ENCODE measurements at regions of chrX and their contacts with region 1.

Region 1: GRCh38 chrX:133985164-133985966 is at the start of gene GPC3:
- DNase-seq: peak; percentile 14 to 61 (median 39)
- ATAC-seq: peak; percentile 88
- H3K4me3 ChIP-seq: no peak within 1 kb of the TSS
- H3K4me3 Mint-ChIP-seq: peak within 1 kb of the TSS; percentile 69 to 89 (median 80)
- H3K27ac ChIP-seq: no peak within 1 kb of the TSS
- H3K27ac Mint-ChIP-seq: no peak within 1 kb of the TSS
- H3K4me1 ChIP-seq: no peaks in the 10 kb centered on the region
- H3K4me1 Mint-ChIP-seq: peaks cover 0 to 8% (median 4%) of the 10 kb centered on the region in 7 donors
- H3K27me3 ChIP-seq: peaks cover 0 to 3% of the 10 kb centered on the region in 2 donors
- H3K27me3 Mint-ChIP-seq: peaks cover 11 to 50% (median 18%) of the 10 kb centered on the region in 5 donors
- total RNA-seq, gene GPC3: 0.24 to 0.88 (median 0.42) TPM

Region 2: GRCh38 chrX:132837126-132837525 is 1148.2 kb before region 1 on chrX:
- CTCF ChIA-PET with region 1: no interaction called
- POLR2A ChIA-PET with region 1: no interaction called
- intact Hi-C with region 1: no loop called
- DNase-seq: no peak
- ATAC-seq: no peak
- H3K4me3 ChIP-seq: no peak overlapping the region
- H3K4me3 Mint-ChIP-seq: no peak overlapping the region
- H3K27ac ChIP-seq: no peak overlapping the region
- H3K27ac Mint-ChIP-seq: no peak overlapping the region
- H3K4me1 ChIP-seq: no peaks in the 10 kb centered on the region
- H3K4me1 Mint-ChIP-seq: no peaks in the 10 kb centered on the region
- H3K27me3 ChIP-seq: no peaks in the 10 kb centered on the region
- H3K27me3 Mint-ChIP-seq: peaks cover 0 to 6% (median 0%) of the 10 kb centered on the region in 5 donors

Region 3: GRCh38 chrX:133921764-133922389 is 63.5 kb before region 1 on chrX:
- CTCF ChIA-PET with region 1: no interaction called
- POLR2A ChIA-PET with region 1: no interaction called
- intact Hi-C with region 1: loop called in 1 of 2 experiments (anchors 10 kb)
- DNase-seq: peak in 5 of 9 donors; percentile 7 to 33 (median 22)
- ATAC-seq: no peak
- H3K4me3 ChIP-seq: peak overlapping the region; percentile 24
- H3K4me3 Mint-ChIP-seq: peak overlapping the region in 5 of 10 donors; percentile 7 to 90 (median 83)
- H3K27ac ChIP-seq: no peak overlapping the region
- H3K27ac Mint-ChIP-seq: peak overlapping the region in 7 of 9 donors; percentile 38 to 95 (median 92)
- H3K4me1 ChIP-seq: peaks cover 13 to 17% of the 10 kb centered on the region in 2 donors
- H3K4me1 Mint-ChIP-seq: peaks cover 4 to 39% (median 26%) of the 10 kb centered on the region in 7 donors
- H3K27me3 ChIP-seq: no peaks in the 10 kb centered on the region
- H3K27me3 Mint-ChIP-seq: no peaks in the 10 kb centered on the region

Region 4: GRCh38 chrX:133970076-133970475 is 15.3 kb before region 1 on chrX:
- CTCF ChIA-PET with region 1: no interaction called
- POLR2A ChIA-PET with region 1: no interaction called
- intact Hi-C with region 1: no loop called
- DNase-seq: no peak
- ATAC-seq: no peak
- H3K4me3 ChIP-seq: no peak overlapping the region
- H3K4me3 Mint-ChIP-seq: no peak overlapping the region
- H3K27ac ChIP-seq: no peak overlapping the region
- H3K27ac Mint-ChIP-seq: no peak overlapping the region
- H3K4me1 ChIP-seq: no peaks in the 10 kb centered on the region
- H3K4me1 Mint-ChIP-seq: peaks cover 0 to 5% (median 3%) of the 10 kb centered on the region in 7 donors
- H3K27me3 ChIP-seq: no peaks in the 10 kb centered on the region
- H3K27me3 Mint-ChIP-seq: peaks cover 0 to 7% (median 0%) of the 10 kb centered on the region in 5 donors

Measured in naive thymus-derived CD4-positive, alpha-beta T cell (primary cell).